Sciatic nerve (tissue), 2 donors: ENCODE measurements at regions of chr19 and their contacts with region 1.

Region 1: DNA sequence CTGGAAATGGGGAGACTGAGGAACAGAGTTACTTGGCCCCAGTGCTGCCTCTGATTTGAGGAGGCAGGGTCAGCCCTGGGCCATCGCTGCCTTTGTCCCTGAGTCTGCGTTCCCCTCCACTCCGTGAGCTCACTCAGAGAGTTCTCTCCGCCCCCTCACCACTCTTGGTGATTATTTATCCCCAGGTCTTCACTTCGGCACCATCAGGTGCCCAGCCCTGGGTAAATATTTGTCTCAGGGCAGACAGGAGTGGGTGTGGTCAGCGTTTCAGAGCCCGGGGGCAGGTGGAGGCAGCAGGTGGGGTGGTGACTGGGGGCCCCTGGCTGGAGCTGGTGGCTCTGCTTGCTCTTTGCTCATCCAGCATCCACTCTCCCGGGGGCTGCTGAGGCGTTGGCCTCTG is 20.6 kb downstream of the PPP1R37 start:
- DNase-seq: no peak
- ATAC-seq: no peak

Region 2: GRCh38 chr19:45523642-45524256 is 410.1 kb after region 1 on chr19:
- intact Hi-C with region 1: no loop called
- DNase-seq: peak; percentile 80
- ATAC-seq: peak; percentile 97

Region 3: DNA sequence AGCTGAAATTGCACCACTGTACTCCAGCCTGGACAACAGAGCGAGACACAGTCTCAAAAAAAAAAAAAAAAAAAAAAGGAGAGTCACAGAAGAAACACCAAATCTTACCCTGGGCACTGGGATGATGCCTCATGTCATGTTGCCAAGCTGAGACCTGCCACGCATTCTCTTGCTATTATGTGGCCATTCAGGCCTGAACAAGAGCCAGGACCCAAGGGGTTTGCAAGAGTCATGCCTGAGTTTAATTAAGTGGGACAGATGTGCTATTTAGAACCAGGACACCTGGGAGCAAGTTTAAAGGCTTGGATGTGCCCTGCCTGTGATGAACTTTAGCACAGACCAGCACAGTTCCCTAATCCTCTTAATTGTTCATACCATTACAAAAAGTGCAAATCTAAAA is 1347.9 kb after region 1 on chr19:
- intact Hi-C with region 1: loop called (anchors 5 kb)
- DNase-seq: no peak
- ATAC-seq: no peak